Prostate gland (tissue), 2 donors: ENCODE measurements at regions of chr21 and their contacts with region 1.

Region 1: GRCh38 chr21:43659136-43660000 is at the starts of genes HSF2BP and RRP1B:
- DNase-seq: peak; percentile 71
- H3K4me3 ChIP-seq: peak within 1 kb of the TSS; percentile 72 to 87
- H3K27ac ChIP-seq: peak within 1 kb of the TSS; percentile 72 to 76
- H3K4me1 ChIP-seq: peaks cover 7% of the 10 kb centered on the region
- H3K27me3 ChIP-seq: no peaks in the 10 kb centered on the region
- CTCF ChIP-seq: peak in 2 of 4 experiments; percentile 37 to 52
- POLR2A ChIP-seq: peak; percentile 58
- total RNA-seq, gene HSF2BP: 3.2 to 7.0 TPM
- total RNA-seq, gene RRP1B: 22.7 to 38.3 TPM

Region 2: GRCh38 chr21:43277481-43278351 is 381.7 kb before region 1 on chr21:
- intact Hi-C with region 1: no loop called
- DNase-seq: no peak
- H3K4me3 ChIP-seq: no peak overlapping the region
- H3K27ac ChIP-seq: no peak overlapping the region
- H3K4me1 ChIP-seq: no peaks in the 10 kb centered on the region
- H3K27me3 ChIP-seq: no peaks in the 10 kb centered on the region
- CTCF ChIP-seq: no peak
- POLR2A ChIP-seq: no peak

Region 3: GRCh38 chr21:43597052-43597451 is 62.3 kb before region 1 on chr21:
- intact Hi-C with region 1: no loop called
- DNase-seq: no peak
- H3K4me3 ChIP-seq: no peak overlapping the region
- H3K27ac ChIP-seq: no peak overlapping the region
- H3K4me1 ChIP-seq: no peaks in the 10 kb centered on the region
- H3K27me3 ChIP-seq: no peaks in the 10 kb centered on the region
- CTCF ChIP-seq: no peak
- POLR2A ChIP-seq: no peak

Region 4: DNA sequence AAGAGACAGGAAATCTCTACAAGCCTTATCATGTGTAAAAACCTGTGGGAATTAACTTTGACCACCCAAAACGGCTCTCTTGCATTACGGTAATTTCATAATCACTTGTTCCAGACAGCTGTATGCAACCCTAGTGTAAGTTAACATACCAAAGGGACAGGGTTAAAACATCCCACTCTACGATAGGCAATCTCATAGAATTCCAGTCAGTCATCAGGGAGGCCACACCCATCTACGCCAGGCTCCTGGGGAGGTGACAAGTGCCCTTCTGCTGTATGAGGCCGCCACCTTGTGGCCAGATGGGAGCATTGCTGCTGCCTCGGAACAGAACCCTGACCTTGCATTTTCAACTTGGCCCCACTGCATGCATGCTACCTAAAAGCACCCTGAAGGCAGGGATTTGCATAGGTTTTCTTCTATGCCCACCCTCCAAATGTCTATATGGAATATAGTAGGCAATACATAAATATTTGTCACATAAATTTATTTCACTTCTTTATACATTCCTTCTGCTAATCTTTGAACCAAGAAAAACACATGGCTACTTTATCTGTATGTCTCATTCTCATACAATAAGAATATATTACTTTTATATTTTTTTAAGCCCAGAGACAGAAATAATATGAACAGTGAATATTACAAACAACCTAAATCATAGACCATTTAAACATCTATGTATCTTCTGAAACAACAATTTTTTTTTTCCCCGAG is 12.7 kb before region 1 on chr21:
- intact Hi-C with region 1: no loop called
- DNase-seq: peak; percentile 90
- H3K4me3 ChIP-seq: no peak overlapping the region
- H3K27ac ChIP-seq: no peak overlapping the region
- H3K4me1 ChIP-seq: no peaks in the 10 kb centered on the region
- H3K27me3 ChIP-seq: no peaks in the 10 kb centered on the region
- CTCF ChIP-seq: peak; percentile 97 to 100 (median 100)
- POLR2A ChIP-seq: no peak

Region 5: DNA sequence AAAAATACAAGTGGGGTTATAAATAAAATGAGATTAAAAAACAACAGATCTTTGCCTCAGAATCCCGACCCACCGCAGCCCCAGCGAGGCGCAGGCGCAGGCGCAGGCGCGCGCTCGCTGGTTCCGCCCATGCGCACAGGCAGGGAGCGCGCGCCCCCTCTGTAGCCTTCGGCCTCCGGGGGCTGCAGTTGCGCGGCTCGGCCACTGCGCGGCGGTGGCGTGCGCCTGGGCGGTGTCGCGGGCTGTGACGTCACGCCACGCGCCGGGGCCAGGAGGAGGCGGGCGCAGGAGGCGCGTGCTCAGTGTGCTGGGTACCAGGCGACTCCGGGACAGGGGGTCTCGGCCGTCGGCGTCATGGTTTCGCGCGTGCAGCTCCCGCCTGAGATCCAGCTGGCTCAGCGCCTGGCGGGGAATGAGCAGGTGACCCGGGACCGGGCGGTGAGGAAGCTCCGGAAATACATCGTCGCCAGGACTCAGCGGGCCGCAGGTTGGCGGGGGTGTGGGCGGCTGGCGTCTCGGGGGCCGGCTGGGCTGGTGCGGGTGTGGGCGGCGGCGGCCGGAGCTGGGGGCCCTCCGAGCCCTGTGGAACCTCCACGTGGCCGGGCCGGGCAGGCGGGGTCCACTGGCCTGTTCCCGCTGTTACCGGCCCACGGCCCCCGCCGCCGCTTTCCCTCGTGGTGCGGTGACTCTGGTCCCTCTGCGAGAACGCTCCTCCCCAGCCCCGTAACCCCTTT is 130.1 kb after region 1 on chr21 and contains the start of gene RRP1:
- intact Hi-C with region 1: loop called (anchors 5 kb)
- DNase-seq: peak; percentile 84
- H3K4me3 ChIP-seq: peak within 1 kb of the TSS; percentile 58 to 72
- H3K27ac ChIP-seq: peak within 1 kb of the TSS; percentile 84 to 86
- H3K4me1 ChIP-seq: peaks cover 3% of the 10 kb centered on the region
- H3K27me3 ChIP-seq: no peaks in the 10 kb centered on the region
- CTCF ChIP-seq: peak; percentile 100
- POLR2A ChIP-seq: peak; percentile 76
- total RNA-seq, gene RRP1: 29.4 to 37.5 TPM